Right ventricle myocardium superior (tissue), 1 donor: ENCODE measurements at regions of chr1 and their contacts with region 1.

Region 1: DNA sequence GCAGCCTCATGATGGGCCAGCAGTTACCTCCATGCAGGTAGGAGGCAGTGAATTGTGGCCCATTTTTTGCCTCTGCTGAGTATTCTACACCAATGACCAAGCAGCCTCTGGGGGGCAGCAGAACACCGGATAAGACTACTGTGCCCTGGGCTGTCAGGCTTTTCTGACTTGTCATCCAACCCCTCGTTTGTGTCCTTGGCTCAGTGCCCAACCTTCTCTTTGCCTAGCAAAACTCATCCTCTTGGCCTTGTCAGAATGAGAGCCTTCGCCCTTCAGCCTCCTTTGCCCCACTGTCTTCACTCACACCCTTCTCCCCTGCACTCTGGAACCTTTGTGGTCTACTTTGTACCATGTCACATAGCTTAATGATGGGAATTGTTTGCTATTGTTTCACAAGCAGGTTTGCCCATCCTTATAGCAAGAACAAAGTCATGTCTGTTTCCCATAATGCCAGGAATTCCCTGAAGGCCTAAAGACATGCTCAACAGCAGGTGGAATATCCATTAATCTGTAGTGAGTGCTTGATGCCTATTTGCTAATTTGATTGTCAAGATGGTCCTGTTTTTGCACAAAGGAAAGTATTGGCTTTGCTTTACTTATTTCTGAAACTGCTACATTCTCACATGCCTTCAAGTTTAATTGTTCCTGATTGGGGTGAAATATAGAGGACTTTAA is 255.9 kb downstream of the HHAT start:
- DNase-seq: peak; percentile 82
- ATAC-seq: peak; percentile 85

Region 2: DNA sequence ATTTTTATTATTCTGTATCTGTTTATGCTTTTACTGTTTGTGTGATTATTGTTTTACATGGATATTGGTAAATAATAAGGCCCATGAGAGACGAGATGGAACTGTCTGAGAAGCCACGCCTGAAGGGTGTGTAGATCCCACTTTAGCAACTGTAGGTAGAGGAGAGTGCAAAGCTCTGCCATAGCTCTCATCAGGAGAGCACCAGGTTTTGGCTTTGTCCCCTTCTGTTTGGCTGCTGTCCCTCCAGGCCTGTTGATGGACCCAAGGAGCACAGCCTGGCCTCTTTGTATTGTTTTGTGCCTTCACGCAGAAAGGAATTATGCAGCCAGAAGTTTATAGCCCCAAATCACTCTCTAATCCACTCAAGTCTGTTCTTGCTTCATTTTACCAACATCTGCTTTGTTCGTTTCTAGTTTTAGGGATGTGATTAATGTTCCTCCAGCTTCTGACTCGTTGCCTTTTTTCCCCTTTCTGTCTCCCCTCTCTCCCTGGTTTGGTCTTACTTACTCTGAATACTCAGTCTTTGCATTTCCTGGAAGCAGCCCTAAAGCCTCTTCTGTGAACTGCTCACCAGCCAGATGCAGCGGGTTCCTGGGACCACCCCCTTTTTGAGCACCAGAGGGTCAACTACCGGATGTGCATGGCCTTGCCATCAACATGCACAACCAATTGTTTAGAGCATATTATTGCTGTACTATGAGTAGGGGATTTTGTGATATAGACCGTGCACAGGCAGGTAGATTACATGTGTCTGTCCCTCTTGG is 128.6 kb before region 1 on chr1:
- intact Hi-C with region 1: loop called (anchors 10 kb)
- DNase-seq: no peak
- ATAC-seq: no peak

Region 3: DNA sequence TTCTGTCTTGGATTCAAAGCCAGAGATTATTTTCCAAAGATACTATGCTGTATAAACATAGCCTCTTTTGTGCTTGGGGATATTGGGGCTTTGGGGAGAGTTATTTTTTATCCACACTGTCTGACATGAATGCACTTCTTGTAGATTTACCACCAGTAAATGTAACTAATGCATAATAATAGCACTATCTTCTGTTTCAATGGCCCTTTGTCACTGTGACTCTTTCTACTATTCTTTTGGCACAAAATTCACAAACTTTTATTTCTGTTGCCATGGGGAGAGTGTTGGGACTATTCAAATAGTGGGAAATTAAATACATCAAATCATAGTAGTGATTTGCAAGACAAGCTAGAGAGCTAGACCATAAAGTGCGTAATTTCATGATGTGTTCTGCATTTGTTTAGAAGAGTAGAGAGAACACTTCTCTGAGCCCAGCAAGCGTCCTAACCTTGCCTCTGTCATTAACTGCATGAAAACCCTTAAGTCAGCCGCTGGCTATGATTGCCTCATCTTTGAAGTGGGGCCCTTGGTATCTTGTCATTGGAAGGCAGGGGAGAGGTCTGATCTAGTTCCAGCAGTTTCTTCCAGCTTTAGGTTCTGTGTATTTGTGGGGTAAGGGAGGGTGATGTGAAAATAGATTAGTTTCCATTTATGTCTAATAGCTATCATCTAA is 101.5 kb before region 1 on chr1:
- intact Hi-C with region 1: no loop called
- DNase-seq: no peak
- ATAC-seq: no peak

Region 4: GRCh38 chr1:211183747-211184313 is 599.3 kb after region 1 on chr1:
- intact Hi-C with region 1: no loop called
- DNase-seq: no peak
- ATAC-seq: no peak